ENCODE measurements at regions of chr22 and their contacts with region 1.

Region 1: DNA sequence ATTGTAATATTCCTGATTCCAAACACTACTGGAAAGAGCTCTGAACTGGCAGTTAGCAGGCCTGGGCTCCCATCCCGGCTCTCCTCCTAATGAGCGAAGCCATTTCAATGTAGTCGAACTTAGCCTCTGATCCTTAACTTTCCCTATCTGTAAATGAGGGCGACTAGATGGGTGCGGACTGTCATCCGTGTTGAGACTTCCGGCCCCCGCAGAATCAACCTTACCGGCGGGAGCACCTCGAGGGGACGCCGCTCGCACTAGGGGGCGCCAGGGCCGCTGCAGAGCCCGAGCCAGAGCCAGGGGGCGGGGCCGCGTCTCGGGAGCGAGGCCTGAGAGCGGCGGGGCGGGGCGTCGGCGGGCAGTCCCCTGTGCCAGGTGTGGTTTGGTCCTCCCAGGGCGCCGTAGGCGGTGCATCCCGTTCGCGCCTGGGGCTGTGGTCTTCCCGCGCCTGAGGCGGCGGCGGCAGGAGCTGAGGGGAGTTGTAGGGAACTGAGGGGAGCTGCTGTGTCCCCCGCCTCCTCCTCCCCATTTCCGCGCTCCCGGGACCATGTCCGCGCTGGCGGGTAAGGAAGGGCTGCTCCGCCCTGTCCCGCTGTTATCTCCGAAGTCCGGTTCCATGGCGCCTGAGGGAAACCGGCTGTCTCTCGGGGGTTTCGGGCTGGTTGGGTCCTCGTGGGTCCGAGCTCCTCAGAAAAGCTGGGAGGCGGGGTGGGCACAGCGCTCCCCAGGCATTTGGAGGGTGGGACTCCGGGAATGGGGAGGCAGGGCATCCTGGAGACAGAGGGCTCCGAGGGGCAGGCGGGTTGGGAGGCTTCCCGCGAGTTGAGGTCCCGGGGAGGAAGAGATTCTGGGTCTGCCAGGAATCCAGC is at the start of gene LIMK2:
- DNase-seq: peak; percentile 79
- total RNA-seq, gene LIMK2: 9.5 and 18.1 TPM in 2 replicates

Region 2: DNA sequence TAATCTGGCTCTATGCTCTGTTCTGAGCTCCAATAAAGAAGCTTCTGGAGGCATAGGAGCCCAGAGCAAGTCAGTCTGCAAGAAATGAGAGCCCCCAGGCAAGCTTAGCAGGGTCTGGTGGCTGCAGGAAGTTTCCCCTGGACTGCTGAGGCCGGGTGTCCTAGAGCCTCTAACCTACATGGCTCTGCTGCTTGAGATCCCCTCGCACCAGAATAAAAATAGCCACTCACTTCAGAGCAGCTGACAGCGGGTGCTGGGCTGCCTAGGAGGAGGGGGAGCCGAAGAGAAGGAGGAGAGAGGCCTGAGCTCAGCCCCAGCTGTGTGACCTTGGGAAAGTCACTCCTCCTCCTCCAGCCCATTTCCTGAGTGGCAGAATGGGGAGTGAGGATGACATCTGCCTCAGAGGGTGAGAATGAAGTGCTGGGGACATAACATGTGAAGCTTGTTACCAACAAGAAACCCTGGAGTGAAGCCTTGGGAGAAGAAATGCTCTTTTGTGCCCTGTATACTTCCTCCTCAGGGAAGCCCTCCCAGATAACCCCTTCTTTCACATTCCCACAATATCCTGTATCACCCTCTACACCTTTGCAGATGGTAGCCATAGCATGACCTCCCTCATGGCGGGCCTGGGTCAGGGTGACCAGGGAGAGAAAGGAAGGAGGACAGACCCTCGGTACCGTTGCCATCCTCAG is 92.9 kb before region 1 on chr22:
- in situ Hi-C with region 1: loop called (anchors 10 kb)
- DNase-seq: no peak

Measured in Caki2 (cell line).